Activated CD4-positive, alpha-beta T cell treated with anti-CD3 and anti-CD28 coated beads, Interleukin-2, amount 10 ng/mL, durations not matched to agents 24 days and 14 days (primary cell): ENCODE measurements at regions of chr12 and their contacts with region 1.

Region 1: GRCh38 chr12:124898200-124898922 is 16.1 kb downstream of the UBC start:
- DNase-seq: peak; percentile 86
- H3K4me3 Mint-ChIP-seq: peak overlapping the region; percentile 6
- H3K27ac Mint-ChIP-seq: no peak overlapping the region
- H3K4me1 Mint-ChIP-seq: peaks cover 17% of the 10 kb centered on the region
- H3K27me3 Mint-ChIP-seq: peaks cover 4% of the 10 kb centered on the region

Region 2: DNA sequence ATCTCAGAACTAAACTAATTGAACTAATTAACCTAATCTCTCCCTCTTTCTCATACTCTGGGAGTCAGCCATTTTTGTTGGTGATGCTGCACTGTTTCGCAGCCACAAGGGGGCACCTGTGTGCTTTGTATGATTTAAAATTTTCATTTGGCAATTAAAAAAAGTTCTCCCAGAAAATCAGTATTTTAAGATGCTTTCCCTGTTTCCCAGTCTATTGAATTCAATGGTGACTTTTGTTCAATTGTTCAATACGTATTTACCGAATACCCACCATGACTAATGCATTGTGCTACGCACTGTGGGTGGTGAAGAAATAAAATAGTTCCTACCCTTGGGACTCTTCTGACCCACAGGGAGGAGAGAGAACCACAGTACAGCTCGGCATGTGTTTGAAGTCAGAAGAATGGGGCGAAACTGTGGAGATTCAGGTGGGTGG is 861.7 kb before region 1 on chr12:
- intact Hi-C with region 1: loop called (anchors 2 kb)
- DNase-seq: peak; percentile 77
- H3K4me3 Mint-ChIP-seq: no peak overlapping the region
- H3K27ac Mint-ChIP-seq: no peak overlapping the region
- H3K4me1 Mint-ChIP-seq: no peaks in the 10 kb centered on the region
- H3K27me3 Mint-ChIP-seq: peaks cover 26% of the 10 kb centered on the region

Region 3: GRCh38 chr12:124863416-124864325 is 34.7 kb before region 1 on chr12 and contains the start of gene SCARB1:
- intact Hi-C with region 1: loop called (anchors 5 kb)
- DNase-seq: peak; percentile 92
- H3K4me3 Mint-ChIP-seq: peak within 1 kb of the TSS; percentile 84
- H3K27ac Mint-ChIP-seq: peak within 1 kb of the TSS; percentile 95
- H3K4me1 Mint-ChIP-seq: peaks cover 18% of the 10 kb centered on the region
- H3K27me3 Mint-ChIP-seq: peaks cover 7% of the 10 kb centered on the region
- total RNA-seq, gene SCARB1: 23.8 and 25.6 TPM in 2 replicates

Region 4: DNA sequence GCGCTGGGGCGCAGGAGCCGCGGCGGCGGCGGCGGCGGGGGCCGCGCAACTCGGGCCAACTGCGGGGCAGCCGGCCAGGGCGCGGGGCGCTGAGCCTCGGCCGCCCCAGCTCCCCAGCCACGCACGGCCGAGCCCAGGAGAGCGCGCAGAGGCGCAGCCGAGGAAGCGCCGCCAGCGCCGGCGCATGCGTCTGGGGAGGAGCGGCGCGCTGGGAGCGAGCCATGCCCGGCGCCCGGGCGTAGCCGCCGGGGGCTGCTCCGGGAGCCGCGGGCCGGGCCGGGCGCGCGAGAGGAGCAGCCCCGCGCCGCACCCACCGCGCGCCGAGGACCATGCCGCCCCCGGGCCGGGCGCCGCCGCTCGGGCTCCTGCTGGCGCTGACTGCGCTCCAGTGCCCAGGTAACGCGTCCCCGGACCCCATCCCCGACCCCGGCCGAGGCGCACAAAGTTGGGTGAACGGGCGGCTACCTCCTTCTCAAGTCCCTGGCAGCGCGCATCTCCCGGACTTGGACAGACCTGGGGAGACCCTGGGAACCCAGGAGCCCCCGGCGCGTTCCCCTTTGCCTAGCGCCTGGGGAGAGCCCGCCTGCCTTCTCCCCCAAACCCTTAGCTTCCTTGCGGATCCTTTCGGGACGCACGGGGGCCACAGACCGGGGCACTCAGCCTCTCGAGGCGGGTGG is 288.2 kb after region 1 on chr12:
- intact Hi-C with region 1: no loop called
- DNase-seq: no peak
- H3K4me3 Mint-ChIP-seq: peak overlapping the region; percentile 17
- H3K27ac Mint-ChIP-seq: no peak overlapping the region
- H3K4me1 Mint-ChIP-seq: peaks cover 14% of the 10 kb centered on the region
- H3K27me3 Mint-ChIP-seq: peaks cover 66% of the 10 kb centered on the region